ENCODE measurements at regions of chr12 and their contacts with region 1.

Region 1: GRCh38 chr12:31682136-31682962 is 22.9 kb downstream of the ETFBKMT start:
- DNase-seq: peak; percentile 70
- H3K4me3 ChIP-seq: no peak overlapping the region
- H3K27ac ChIP-seq: no peak overlapping the region
- H3K4me1 ChIP-seq: no peaks in the 10 kb centered on the region
- H3K27me3 ChIP-seq: no peaks in the 10 kb centered on the region
- CTCF ChIP-seq: peak; percentile 51 to 76 (median 62)
- EP300 ChIP-seq: no peak
- POLR2A ChIP-seq: no peak

Region 2: GRCh38 chr12:31813305-31813704 is 131.0 kb after region 1 on chr12:
- in situ Hi-C with region 1: loop called in 1 of 4 experiments (anchors 25 kb)
- intact Hi-C with region 1: no loop called
- DNase-seq: peak; percentile 19
- H3K4me3 ChIP-seq: no peak overlapping the region
- H3K27ac ChIP-seq: no peak overlapping the region
- H3K4me1 ChIP-seq: peaks cover 0 to 7% (median 0%) of the 10 kb centered on the region in 4 donors
- H3K27me3 ChIP-seq: no peaks in the 10 kb centered on the region
- CTCF ChIP-seq: peak in 1 of 5 experiments; percentile 6
- EP300 ChIP-seq: no peak
- POLR2A ChIP-seq: no peak

Region 3: DNA sequence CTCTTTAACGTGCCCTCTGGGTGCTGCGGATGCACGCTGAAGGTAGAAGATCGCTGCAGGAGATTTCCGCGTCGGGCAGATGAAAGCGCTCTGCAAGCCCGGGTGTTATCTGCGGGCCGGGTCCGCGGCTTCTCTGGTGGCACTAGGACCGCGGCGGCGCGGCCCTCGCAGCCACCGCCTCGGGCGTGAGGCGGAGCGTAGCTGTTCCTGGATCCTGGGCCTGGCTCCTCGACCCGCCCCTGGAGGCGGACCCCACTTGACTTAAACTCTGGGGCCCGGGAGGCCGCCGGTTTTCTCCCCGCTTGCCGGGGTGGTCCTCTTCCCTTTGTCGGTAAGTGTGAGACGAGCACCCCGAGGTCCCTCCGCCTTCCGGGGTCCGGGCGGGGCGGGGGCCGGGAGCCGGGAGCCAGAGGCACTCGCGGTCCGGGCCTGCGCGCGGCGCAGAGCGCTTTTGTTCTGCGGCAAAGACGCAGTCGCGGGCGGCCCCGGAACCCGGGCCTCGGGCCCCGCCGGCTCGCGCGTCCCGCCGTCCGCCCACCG is 276.9 kb after region 1 on chr12 and contains the start of gene RESF1:
- in situ Hi-C with region 1: loop called in 1 of 4 experiments (anchors 25 kb)
- intact Hi-C with region 1: no loop called
- DNase-seq: peak; percentile 93
- H3K4me3 ChIP-seq: peak within 1 kb of the TSS; percentile 70 to 90 (median 78)
- H3K27ac ChIP-seq: peak within 1 kb of the TSS; percentile 94 to 98 (median 96)
- H3K4me1 ChIP-seq: peaks cover 10 to 30% (median 20%) of the 10 kb centered on the region in 4 donors
- H3K27me3 ChIP-seq: no peaks in the 10 kb centered on the region
- CTCF ChIP-seq: no peak
- EP300 ChIP-seq: no peak
- POLR2A ChIP-seq: peak; percentile 86
- total RNA-seq, gene RESF1: 23.3 to 81.8 (median 35.1) TPM

Region 4: DNA sequence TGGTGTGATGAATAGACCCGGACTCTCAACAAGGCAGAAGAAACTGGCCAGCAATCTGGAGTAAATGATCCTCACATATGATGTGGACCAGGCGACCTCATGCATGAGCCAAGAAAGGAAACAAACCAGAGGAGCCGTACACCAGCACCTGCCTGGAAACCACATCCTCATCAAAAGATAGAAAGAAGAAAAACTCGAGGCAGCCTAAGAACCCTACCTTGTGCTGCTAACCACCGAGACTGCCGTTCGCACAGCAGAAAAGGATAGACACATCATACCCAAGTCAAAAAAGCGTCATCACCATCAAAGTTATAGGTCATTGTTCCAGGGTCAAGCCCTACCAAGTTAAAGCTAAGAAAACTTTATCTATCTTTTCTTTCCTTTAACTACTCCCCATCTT is 343.6 kb after region 1 on chr12:
- in situ Hi-C with region 1: loop called in 1 of 4 experiments (anchors 25 kb)
- intact Hi-C with region 1: no loop called
- DNase-seq: peak; percentile 10
- H3K4me3 ChIP-seq: no peak overlapping the region
- H3K27ac ChIP-seq: no peak overlapping the region
- H3K4me1 ChIP-seq: no peaks in the 10 kb centered on the region
- H3K27me3 ChIP-seq: no peaks in the 10 kb centered on the region
- CTCF ChIP-seq: no peak
- EP300 ChIP-seq: no peak
- POLR2A ChIP-seq: no peak

Region 5: GRCh38 chr12:32051559-32052414 is 369.4 kb after region 1 on chr12:
- in situ Hi-C with region 1: loop called in 2 of 4 experiments (anchors 25 kb)
- intact Hi-C with region 1: no loop called
- DNase-seq: no peak
- H3K4me3 ChIP-seq: no peak overlapping the region
- H3K27ac ChIP-seq: no peak overlapping the region
- H3K4me1 ChIP-seq: no peaks in the 10 kb centered on the region
- H3K27me3 ChIP-seq: no peaks in the 10 kb centered on the region
- CTCF ChIP-seq: no peak
- EP300 ChIP-seq: no peak
- POLR2A ChIP-seq: no peak